Transverse colon (tissue), 4 donors: ENCODE measurements at regions of chr1 and their contacts with region 1.

Region 1: GRCh38 chr1:22131875-22132486 is 10.9 kb downstream of the WNT4 start:
- DNase-seq: peak; percentile 59
- H3K4me3 ChIP-seq: no peak overlapping the region
- H3K27ac ChIP-seq: no peak overlapping the region
- H3K4me1 ChIP-seq: peaks cover 0 to 6% (median 2%) of the 10 kb centered on the region in 4 donors
- H3K27me3 ChIP-seq: no peaks in the 10 kb centered on the region
- CTCF ChIP-seq: peak; percentile 77 to 89 (median 79)
- EP300 ChIP-seq: no peak
- POLR2A ChIP-seq: no peak

Region 2: DNA sequence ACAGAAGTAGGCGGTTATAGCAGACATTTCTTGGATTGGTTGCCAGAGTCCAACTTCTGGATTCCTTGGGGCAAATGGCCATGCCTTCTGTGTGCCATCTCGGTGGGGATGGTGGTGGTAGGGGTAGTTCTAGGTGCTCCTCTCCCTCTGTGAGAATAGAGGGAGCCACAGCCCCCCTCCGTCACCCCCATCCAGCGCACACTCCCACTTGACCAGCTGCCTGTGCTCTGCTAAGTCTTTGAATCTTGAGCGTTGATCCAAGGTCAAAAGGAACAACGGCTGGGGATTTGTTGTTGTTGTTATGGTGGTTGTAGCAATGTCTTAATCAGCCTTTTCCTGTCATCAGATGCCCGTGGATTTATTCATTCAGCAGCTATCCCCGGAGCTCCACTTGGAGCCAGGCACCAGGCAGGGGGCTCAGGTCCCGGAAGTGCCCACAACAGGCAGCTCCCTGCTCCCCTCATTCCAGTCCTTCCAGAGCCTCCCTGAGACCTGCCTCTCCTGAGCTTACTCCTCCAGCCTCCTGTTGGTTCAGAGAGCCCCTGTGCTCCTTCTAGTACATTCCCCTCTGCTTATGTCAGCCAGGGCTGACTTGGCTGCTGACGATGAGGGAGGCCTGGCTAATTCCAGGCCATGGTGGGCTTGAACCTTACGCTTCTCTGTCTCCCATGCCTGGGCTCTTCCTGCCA is 157.5 kb after region 1 on chr1:
- in situ Hi-C with region 1: loop called in 1 of 4 experiments (anchors 10 kb)
- intact Hi-C with region 1: no loop called
- DNase-seq: no peak
- H3K4me3 ChIP-seq: no peak overlapping the region
- H3K27ac ChIP-seq: no peak overlapping the region
- H3K4me1 ChIP-seq: peaks cover 0 to 6% (median 3%) of the 10 kb centered on the region in 4 donors
- H3K27me3 ChIP-seq: no peaks in the 10 kb centered on the region
- CTCF ChIP-seq: no peak
- EP300 ChIP-seq: no peak
- POLR2A ChIP-seq: no peak

Region 3: GRCh38 chr1:22641906-22642636 is 510.1 kb after region 1 on chr1:
- in situ Hi-C with region 1: loop called in 2 of 4 experiments (anchors 25 kb)
- intact Hi-C with region 1: no loop called
- DNase-seq: peak; percentile 82
- H3K4me3 ChIP-seq: no peak overlapping the region
- H3K27ac ChIP-seq: no peak overlapping the region
- H3K4me1 ChIP-seq: no peaks in the 10 kb centered on the region
- H3K27me3 ChIP-seq: no peaks in the 10 kb centered on the region
- CTCF ChIP-seq: peak; percentile 81 to 92 (median 91)
- EP300 ChIP-seq: no peak
- POLR2A ChIP-seq: no peak